GM12878 (cell line): ENCODE measurements at regions of chr3 and their contacts with region 1.

Region 1: DNA sequence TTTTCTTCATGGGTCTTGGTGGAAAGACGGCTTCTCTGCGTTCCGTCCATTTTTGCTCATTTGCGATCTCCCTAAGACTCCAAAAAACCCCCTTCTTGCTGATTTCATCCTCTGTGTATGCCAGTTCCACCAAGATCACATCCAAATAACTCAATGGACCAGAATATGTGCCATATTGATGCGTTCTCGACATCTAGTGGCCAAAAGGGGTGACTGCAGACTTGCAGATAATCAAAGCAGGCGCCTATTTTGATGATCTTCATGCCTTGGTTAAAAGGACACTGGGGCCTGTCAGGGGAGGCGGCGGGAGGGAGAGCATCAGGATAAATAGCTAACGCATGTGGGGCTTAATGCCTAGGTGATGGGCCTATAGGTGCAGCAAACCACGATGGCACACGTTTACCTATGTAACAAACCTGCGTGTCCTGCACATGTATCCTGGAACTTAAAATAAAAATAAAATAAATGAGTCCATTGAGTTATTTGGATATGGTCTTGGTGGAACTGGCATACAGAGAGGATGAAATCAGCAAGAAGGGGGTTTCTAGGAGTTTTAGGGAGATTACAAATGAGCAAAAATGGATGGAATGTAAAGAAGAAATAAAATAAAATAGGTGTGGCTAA is 104.2 kb upstream of the RAD18 start:
- DNase-seq: peak; percentile 11
- ATAC-seq: peak; percentile 92
- H3K4me3 ChIP-seq: no peak overlapping the region
- H3K27ac ChIP-seq: no peak overlapping the region
- H3K4me1 ChIP-seq: no peaks in the 10 kb centered on the region
- H3K27me3 ChIP-seq: no peaks in the 10 kb centered on the region
- CTCF ChIP-seq: peak; percentile 90 to 95 (median 94)
- EP300 ChIP-seq: no peak
- POLR2A ChIP-seq: no peak
- RAD21 ChIP-seq: peak; percentile 96

Region 2: DNA sequence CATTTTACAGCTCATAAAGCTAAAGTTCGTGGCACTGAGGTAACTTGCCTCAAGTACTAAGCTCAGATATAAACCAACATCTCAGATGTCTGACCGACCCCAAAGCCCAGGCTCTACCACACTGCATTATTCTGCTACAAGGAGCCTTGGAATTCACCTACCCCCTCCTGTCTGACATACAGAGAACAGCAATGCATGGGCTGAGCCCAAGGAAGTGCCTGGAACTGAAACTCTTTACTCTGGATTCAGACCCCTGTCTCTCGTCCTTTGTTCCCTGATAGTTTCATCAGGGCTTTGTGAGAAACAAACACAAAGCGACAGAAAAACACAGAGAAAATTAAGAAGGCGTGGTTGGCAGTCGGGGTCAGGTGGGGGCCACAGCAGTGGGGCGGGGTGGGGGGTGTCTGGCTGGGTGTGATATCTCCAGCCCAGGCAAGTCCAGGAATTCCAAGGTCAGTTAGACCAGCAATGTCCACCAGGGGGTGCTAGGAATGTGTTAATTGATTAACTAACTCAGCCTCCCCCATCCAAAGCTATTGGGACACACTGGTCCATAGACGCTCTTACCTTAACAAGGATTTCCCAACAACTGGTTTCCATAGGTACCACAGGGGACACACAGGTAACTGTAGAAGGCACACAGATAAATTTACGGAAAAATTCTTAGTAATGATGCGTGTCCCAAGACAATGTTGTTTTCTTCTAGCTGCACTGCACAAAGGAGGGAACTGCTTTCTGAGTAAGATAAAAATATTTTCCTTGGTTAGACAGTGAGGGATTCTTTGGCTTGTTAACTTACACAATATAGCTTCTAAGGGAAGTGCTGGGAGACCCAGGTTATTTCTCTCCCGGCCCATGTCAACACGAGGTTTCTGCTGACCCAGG is 404.0 kb before region 1 on chr3:
- CTCF ChIA-PET with region 1: interaction called, 4 read pairs
- POLR2A ChIA-PET with region 1: no interaction called
- RAD21 ChIA-PET with region 1: no interaction called
- SMC1A ChIA-PET with region 1: no interaction called
- in situ Hi-C with region 1: no loop called
- intact Hi-C with region 1: loop called (anchors 10 kb)
- DNase-seq: peak; percentile 36
- ATAC-seq: peak; percentile 56
- H3K4me3 ChIP-seq: no peak overlapping the region
- H3K27ac ChIP-seq: no peak overlapping the region
- H3K4me1 ChIP-seq: peaks cover 24% of the 10 kb centered on the region
- H3K27me3 ChIP-seq: no peaks in the 10 kb centered on the region
- CTCF ChIP-seq: peak; percentile 54 to 68 (median 58)
- EP300 ChIP-seq: no peak
- POLR2A ChIP-seq: no peak
- RAD21 ChIP-seq: peak; percentile 64

Region 3: GRCh38 chr3:8970971-8971589 is 96.4 kb before region 1 on chr3:
- CTCF ChIA-PET with region 1: interaction called, 13 read pairs
- POLR2A ChIA-PET with region 1: no interaction called
- RAD21 ChIA-PET with region 1: interaction called, 3 read pairs
- SMC1A ChIA-PET with region 1: interaction called, 5 read pairs
- in situ Hi-C with region 1: loop called (anchors 5 kb)
- intact Hi-C with region 1: loop called (anchors 1 kb)
- DNase-seq: no peak
- ATAC-seq: peak; percentile 84
- H3K4me3 ChIP-seq: no peak overlapping the region
- H3K27ac ChIP-seq: no peak overlapping the region
- H3K4me1 ChIP-seq: no peaks in the 10 kb centered on the region
- H3K27me3 ChIP-seq: no peaks in the 10 kb centered on the region
- CTCF ChIP-seq: peak; percentile 91 to 96 (median 92)
- EP300 ChIP-seq: no peak
- POLR2A ChIP-seq: no peak
- RAD21 ChIP-seq: peak; percentile 97

Region 4: DNA sequence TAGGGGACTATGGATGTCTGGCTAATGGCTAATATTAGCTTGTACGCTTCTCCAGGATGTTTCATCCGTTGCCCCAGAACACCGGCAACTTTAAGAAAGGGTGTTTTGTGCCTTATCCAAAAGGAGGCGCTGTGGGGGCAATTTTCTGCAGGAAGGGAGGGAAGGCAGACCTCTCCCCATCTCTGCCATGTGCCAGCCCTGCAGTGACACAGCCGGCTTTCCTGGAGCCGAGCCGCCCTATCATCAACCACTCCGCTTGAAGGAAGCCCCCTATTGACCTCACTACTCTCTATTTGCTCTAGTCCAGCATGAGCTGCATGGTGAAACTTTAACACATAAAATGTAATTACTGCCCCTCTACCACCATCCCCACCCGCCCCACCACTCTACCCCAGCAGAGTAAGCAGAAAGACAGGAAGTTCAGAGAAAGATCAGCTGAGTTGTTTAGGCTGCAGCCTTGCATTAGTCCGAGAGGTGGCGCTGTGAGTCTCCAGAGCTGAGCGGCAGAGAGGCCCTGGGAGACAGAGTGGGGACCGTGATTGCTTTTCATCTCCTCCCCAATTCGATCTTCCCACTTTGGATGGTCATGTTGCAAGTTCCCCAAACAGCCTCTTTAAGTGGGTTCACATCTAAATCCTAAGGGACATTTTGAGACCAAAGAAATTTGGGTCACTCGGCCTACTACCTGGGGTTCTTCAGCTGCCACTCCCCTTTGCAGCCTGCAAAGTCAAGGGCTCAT is 79.7 kb before region 1 on chr3:
- CTCF ChIA-PET with region 1: interaction called, 56 read pairs
- POLR2A ChIA-PET with region 1: no interaction called
- RAD21 ChIA-PET with region 1: interaction called, 5 read pairs
- SMC1A ChIA-PET with region 1: interaction called, 7 read pairs
- in situ Hi-C with region 1: no loop called
- intact Hi-C with region 1: loop called (anchors 1 kb)
- DNase-seq: no peak
- ATAC-seq: peak; percentile 98
- H3K4me3 ChIP-seq: no peak overlapping the region
- H3K27ac ChIP-seq: no peak overlapping the region
- H3K4me1 ChIP-seq: no peaks in the 10 kb centered on the region
- H3K27me3 ChIP-seq: no peaks in the 10 kb centered on the region
- CTCF ChIP-seq: peak; percentile 59 to 85 (median 79)
- EP300 ChIP-seq: no peak
- POLR2A ChIP-seq: no peak
- RAD21 ChIP-seq: peak; percentile 81

Region 5: DNA sequence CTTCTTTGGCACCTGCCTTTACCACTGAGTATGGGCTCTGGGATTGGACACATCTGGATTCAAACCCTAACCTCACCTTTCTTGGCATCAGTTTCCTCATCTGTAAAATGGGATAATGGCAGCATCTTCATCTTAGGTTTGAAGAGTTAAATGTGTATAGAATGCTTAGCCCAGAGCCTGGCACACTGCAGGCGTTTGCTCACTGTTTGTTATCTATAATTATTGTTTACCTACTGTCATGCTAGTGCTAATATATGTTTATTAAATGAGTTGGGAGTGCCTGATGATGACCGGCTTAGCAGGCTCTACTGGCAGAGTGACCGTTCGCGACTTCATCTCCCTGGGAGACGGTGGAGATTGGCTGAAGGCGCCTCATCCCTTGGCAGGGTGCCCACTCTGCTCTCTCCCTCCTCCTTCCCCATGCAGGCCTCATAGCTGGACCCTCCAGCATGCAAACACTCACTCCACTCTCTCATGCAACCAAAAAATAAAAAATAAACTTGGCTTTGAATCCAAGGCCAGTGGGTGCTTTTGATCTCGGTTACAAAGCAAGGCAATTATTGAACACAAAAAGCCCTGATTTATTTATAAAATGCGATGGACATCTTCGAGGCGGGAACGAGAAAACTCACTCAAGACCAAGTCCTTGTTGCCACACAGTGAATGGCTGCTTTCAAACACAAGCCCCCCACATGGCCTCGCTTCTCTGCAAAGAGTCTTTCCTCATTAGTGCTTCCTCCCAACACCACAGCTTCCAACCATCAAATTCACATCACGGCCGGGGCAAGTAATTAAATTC is 31.3 kb after region 1 on chr3:
- CTCF ChIA-PET with region 1: no interaction called
- POLR2A ChIA-PET with region 1: no interaction called
- RAD21 ChIA-PET with region 1: no interaction called
- SMC1A ChIA-PET with region 1: no interaction called
- in situ Hi-C with region 1: no loop called
- intact Hi-C with region 1: no loop called
- DNase-seq: no peak
- ATAC-seq: no peak
- H3K4me3 ChIP-seq: no peak overlapping the region
- H3K27ac ChIP-seq: no peak overlapping the region
- H3K4me1 ChIP-seq: peaks cover 7% of the 10 kb centered on the region; the same call in 1 of the 2 replicates
- H3K27me3 ChIP-seq: no peaks in the 10 kb centered on the region
- CTCF ChIP-seq: no peak
- EP300 ChIP-seq: no peak
- POLR2A ChIP-seq: no peak
- RAD21 ChIP-seq: no peak

Region 6: GRCh38 chr3:9302425-9303181 is 235.1 kb after region 1 on chr3:
- CTCF ChIA-PET with region 1: interaction called, 7 read pairs
- POLR2A ChIA-PET with region 1: no interaction called
- RAD21 ChIA-PET with region 1: interaction called, 3 read pairs
- SMC1A ChIA-PET with region 1: no interaction called
- in situ Hi-C with region 1: loop called (anchors 5 kb)
- intact Hi-C with region 1: loop called (anchors 1 kb)
- DNase-seq: no peak
- ATAC-seq: peak; percentile 100
- H3K4me3 ChIP-seq: no peak overlapping the region
- H3K27ac ChIP-seq: no peak overlapping the region
- H3K4me1 ChIP-seq: no peaks in the 10 kb centered on the region
- H3K27me3 ChIP-seq: no peaks in the 10 kb centered on the region
- CTCF ChIP-seq: peak; percentile 81 to 92 (median 82); a peak in 5 of 6 replicates
- EP300 ChIP-seq: no peak
- POLR2A ChIP-seq: no peak
- RAD21 ChIP-seq: peak; percentile 81

Region 7: GRCh38 chr3:9316881-9317361 is 249.5 kb after region 1 on chr3:
- CTCF ChIA-PET with region 1: no interaction called
- POLR2A ChIA-PET with region 1: no interaction called
- RAD21 ChIA-PET with region 1: no interaction called
- SMC1A ChIA-PET with region 1: no interaction called
- in situ Hi-C with region 1: no loop called
- intact Hi-C with region 1: no loop called
- DNase-seq: no peak
- ATAC-seq: no peak
- H3K4me3 ChIP-seq: no peak overlapping the region
- H3K27ac ChIP-seq: no peak overlapping the region
- H3K4me1 ChIP-seq: no peaks in the 10 kb centered on the region
- H3K27me3 ChIP-seq: peaks cover 0 to 2% of the 10 kb centered on the region in 2 experiments; a peak in 2 of 4 replicates
- CTCF ChIP-seq: no peak
- EP300 ChIP-seq: no peak
- POLR2A ChIP-seq: no peak
- RAD21 ChIP-seq: no peak